Activated B cell treated with CpG ODN at 0.5 μM for 24 hours (primary cell): ENCODE measurements at regions of chr3 and their contacts with region 1.

Region 1: GRCh38 chr3:184298759-184299496 is at the start of gene PSMD2:
- DNase-seq: peak; percentile 96
- ATAC-seq: peak; percentile 96
- H3K4me3 Mint-ChIP-seq: peak within 1 kb of the TSS; percentile 95
- H3K27ac Mint-ChIP-seq: peak within 1 kb of the TSS; percentile 88
- H3K4me1 Mint-ChIP-seq: peaks cover 23% of the 10 kb centered on the region
- H3K27me3 Mint-ChIP-seq: no peaks in the 10 kb centered on the region
- CTCF ChIP-seq: no peak
- total RNA-seq, gene PSMD2: 206 and 210 TPM in 2 replicates

Region 2: GRCh38 chr3:183161552-183162336 is 1137.2 kb before region 1 on chr3:
- CTCF ChIA-PET with region 1: no interaction called
- POLR2A ChIA-PET with region 1: no interaction called
- intact Hi-C with region 1: loop called (anchors 2 kb)
- DNase-seq: peak; percentile 36
- ATAC-seq: peak; percentile 78
- H3K4me3 Mint-ChIP-seq: peak overlapping the region; percentile 81
- H3K27ac Mint-ChIP-seq: peak overlapping the region; percentile 77
- H3K4me1 Mint-ChIP-seq: peaks cover 34% of the 10 kb centered on the region
- H3K27me3 Mint-ChIP-seq: peaks cover 48% of the 10 kb centered on the region
- CTCF ChIP-seq: no peak

Region 3: DNA sequence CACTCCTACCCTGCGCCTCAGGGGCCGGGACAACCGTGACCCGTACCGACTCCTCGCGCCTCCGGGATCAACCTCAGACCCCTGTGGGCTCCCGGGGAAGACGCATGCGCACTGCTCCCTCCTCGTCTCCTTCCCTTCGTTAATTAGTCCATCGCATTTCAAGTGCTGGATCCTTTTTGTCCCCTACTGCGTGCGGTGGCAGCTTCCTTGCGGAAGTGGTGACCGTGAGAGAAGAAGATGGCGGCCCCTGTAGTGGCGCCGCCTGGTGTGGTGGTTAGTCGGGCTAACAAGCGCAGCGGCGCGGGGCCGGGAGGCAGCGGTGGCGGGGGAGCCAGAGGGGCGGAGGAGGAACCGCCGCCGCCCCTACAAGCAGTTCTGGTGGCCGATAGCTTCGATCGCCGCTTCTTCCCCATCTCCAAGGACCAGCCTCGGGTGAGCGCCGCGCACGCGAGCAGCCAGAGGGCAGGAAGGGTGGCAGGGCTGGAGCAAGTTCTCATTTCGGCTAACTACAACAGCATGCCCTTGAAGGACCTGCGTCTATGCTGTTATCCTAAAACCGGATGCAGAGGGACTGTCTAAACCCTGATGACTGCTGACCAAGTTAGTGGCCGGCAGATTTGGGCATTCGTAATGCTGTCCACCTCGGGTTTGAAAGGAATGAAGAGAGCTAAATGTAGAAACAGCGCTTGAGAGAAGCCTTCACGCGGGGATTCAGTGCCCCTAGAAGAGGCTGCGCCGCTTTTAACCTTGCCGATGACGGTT is 163.6 kb before region 1 on chr3 and contains the start of gene EIF2B5:
- CTCF ChIA-PET with region 1: no interaction called
- POLR2A ChIA-PET with region 1: no interaction called
- intact Hi-C with region 1: loop called (anchors 1 kb)
- DNase-seq: peak; percentile 80
- ATAC-seq: peak; percentile 90
- H3K4me3 Mint-ChIP-seq: peak within 1 kb of the TSS; percentile 98
- H3K27ac Mint-ChIP-seq: peak within 1 kb of the TSS; percentile 96
- H3K4me1 Mint-ChIP-seq: peaks cover 33% of the 10 kb centered on the region
- H3K27me3 Mint-ChIP-seq: no peaks in the 10 kb centered on the region
- CTCF ChIP-seq: no peak
- total RNA-seq, gene EIF2B5: 72.0 and 74.2 TPM in 2 replicates

Region 4: GRCh38 chr3:184185461-184186308 is 113.2 kb before region 1 on chr3 and contains the start of gene ABCF3:
- CTCF ChIA-PET with region 1: no interaction called
- POLR2A ChIA-PET with region 1: interaction called, 3 read pairs
- intact Hi-C with region 1: loop called (anchors 1 kb)
- DNase-seq: peak; percentile 99
- ATAC-seq: peak; percentile 95
- H3K4me3 Mint-ChIP-seq: peak within 1 kb of the TSS; percentile 99
- H3K27ac Mint-ChIP-seq: peak within 1 kb of the TSS; percentile 93
- H3K4me1 Mint-ChIP-seq: peaks cover 40% of the 10 kb centered on the region
- H3K27me3 Mint-ChIP-seq: no peaks in the 10 kb centered on the region
- CTCF ChIP-seq: no peak
- total RNA-seq, gene ABCF3: 78.0 and 86.7 TPM in 2 replicates

Region 5: DNA sequence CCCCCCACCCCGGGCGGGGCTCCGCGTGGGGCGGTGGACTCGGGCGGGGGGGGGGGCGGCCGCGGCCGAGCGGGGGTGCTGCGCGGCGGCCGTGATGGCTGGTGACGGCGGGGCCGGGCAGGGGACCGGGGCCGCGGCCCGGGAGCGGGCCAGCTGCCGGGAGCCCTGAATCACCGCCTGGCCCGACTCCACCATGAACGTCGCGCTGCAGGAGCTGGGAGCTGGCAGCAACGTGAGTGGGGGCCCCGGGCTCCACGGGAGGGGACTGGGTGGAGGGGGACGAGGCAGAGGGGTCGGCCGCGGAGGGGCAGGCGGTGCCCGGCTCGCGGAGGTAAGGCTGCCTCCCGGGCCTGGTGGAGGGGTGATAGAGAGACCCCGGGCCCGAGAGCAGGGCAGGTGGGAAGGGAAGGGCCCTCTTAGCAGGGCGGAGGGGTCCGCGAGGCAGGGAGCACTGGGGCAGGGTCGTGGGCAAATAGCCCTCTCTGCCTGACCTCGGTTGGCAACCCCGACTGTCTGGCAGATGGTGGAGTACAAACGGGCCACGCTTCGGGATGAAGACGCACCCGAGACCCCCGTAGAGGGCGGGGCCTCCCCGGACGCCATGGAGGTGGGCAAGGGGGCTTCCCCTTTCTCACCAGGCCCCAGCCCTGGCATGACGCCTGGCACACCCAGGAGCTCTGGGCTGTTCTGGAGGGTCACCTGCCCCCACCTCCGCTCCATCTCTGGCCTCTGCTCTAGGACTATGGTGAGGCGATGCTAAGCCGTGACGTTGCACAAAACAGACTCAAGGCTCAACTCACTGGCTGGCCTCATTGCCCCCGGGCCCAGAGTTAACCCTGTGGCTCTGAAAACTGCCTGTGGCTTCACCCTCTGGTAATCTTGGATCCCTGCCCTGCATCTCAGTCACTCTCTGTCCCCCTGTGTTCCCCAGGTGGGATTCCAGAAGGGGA is 22.7 kb before region 1 on chr3 and contains the start of gene ECE2:
- CTCF ChIA-PET with region 1: no interaction called
- POLR2A ChIA-PET with region 1: no interaction called
- intact Hi-C with region 1: no loop called
- DNase-seq: no peak
- ATAC-seq: no peak
- H3K4me3 Mint-ChIP-seq: no peak within 1 kb of the TSS
- H3K27ac Mint-ChIP-seq: no peak within 1 kb of the TSS
- H3K4me1 Mint-ChIP-seq: peaks cover 3% of the 10 kb centered on the region
- H3K27me3 Mint-ChIP-seq: peaks cover 42% of the 10 kb centered on the region
- CTCF ChIP-seq: no peak
- total RNA-seq, gene ECE2: not detected in 2 replicates

Region 6: DNA sequence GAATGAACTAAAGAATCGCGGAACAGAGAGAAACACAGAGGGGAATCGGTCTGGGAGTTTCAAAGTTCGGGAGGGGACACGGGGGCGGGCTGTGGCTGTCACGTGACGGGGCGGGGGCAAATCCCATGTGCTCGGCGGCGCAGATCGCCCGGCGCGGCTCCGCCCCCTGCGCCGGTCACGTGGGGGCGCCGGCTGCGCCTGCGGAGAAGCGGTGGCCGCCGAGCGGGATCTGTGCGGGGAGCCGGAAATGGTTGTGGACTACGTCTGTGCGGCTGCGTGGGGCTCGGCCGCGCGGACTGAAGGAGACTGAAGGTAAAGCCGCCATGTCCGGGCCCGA is 15.4 kb after region 1 on chr3 and contains the start of gene EIF4G1:
- CTCF ChIA-PET with region 1: no interaction called
- POLR2A ChIA-PET with region 1: interaction called, 3 read pairs
- intact Hi-C with region 1: loop called (anchors 1 kb)
- DNase-seq: peak; percentile 92
- ATAC-seq: peak; percentile 86
- H3K4me3 Mint-ChIP-seq: peak within 1 kb of the TSS; percentile 86
- H3K27ac Mint-ChIP-seq: peak within 1 kb of the TSS; percentile 88
- H3K4me1 Mint-ChIP-seq: peaks cover 28% of the 10 kb centered on the region
- H3K27me3 Mint-ChIP-seq: no peaks in the 10 kb centered on the region
- CTCF ChIP-seq: no peak
- total RNA-seq, gene EIF4G1: 292 and 319 TPM in 2 replicates

Region 7: DNA sequence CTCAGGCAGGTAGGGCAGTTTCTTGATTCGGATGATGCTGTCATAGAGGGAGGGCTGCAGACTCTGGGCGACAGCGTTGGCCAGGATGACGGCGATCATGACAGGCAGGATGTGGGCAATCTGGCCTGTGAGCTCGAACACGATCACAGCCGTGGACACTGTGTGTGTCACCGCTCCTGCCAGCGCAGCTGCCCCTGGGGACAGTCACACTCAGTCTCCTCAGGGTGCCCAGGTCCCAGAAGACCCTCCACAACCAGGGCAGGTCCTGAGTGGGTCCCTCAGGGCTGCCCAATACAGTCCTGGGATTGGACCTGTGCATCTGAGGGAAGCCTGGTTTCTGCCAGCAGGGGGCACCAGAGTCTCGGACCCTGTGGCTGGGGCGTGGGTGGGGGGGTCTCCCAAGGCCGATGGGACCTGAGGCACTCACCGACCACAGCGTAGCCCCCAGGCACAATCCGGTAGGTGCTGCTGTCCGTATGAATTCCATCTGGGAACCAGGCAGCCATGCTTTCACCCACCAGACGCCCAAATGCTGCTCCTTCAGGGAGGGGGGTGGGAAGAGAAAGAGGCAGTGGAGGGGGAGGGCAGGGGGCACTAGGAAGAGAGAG is 55.3 kb after region 1 on chr3:
- CTCF ChIA-PET with region 1: no interaction called
- POLR2A ChIA-PET with region 1: no interaction called
- intact Hi-C with region 1: no loop called
- DNase-seq: peak; percentile 57
- ATAC-seq: peak; percentile 87
- H3K4me3 Mint-ChIP-seq: no peak overlapping the region
- H3K27ac Mint-ChIP-seq: no peak overlapping the region
- H3K4me1 Mint-ChIP-seq: no peaks in the 10 kb centered on the region
- H3K27me3 Mint-ChIP-seq: no peaks in the 10 kb centered on the region
- CTCF ChIP-seq: no peak

Region 8: DNA sequence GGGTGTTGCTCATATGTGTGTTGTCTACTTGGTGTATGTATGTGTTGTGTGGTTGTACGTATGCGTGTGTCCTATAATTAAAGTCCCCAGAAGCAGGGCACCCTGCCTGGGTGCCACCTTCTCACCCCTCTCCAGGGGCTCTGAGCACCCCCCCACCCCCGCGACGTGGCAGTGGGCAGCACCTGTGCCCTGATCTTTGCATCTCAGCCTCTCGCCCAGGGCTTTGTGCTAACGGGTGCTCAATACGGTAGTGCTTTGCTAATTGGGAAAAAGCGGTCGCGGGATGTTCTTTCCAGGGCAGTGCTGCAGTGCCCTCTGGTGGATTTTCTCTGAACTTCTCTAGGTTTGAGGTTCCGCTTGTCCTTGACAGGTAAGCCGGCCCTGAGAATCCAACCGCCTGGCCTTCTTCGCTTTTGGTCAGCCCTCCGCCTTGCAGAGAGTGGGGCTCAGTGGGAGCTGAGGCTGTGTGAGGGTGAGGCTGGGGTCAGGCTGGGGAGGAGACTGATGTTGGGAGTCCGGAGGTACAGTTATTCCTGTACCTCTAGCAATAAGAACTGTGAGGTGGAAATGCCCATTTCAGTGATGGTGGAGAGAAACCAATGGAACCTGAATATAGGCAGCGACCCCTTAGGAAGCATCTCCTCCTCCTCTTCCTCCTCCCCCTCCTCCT is 245.1 kb after region 1 on chr3:
- CTCF ChIA-PET with region 1: no interaction called
- POLR2A ChIA-PET with region 1: no interaction called
- intact Hi-C with region 1: loop called (anchors 5 kb)
- DNase-seq: peak; percentile 56
- ATAC-seq: peak; percentile 85
- H3K4me3 Mint-ChIP-seq: no peak overlapping the region
- H3K27ac Mint-ChIP-seq: no peak overlapping the region
- H3K4me1 Mint-ChIP-seq: peaks cover 12% of the 10 kb centered on the region
- H3K27me3 Mint-ChIP-seq: peaks cover 21% of the 10 kb centered on the region
- CTCF ChIP-seq: peak; percentile 79

Region 9: GRCh38 chr3:186255703-186256331 is 1956.9 kb after region 1 on chr3:
- CTCF ChIA-PET with region 1: no interaction called
- POLR2A ChIA-PET with region 1: no interaction called
- intact Hi-C with region 1: no loop called
- DNase-seq: peak; percentile 64
- ATAC-seq: peak; percentile 65
- H3K4me3 Mint-ChIP-seq: peak overlapping the region; percentile 75
- H3K27ac Mint-ChIP-seq: peak overlapping the region; percentile 83
- H3K4me1 Mint-ChIP-seq: peaks cover 66% of the 10 kb centered on the region
- H3K27me3 Mint-ChIP-seq: no peaks in the 10 kb centered on the region
- CTCF ChIP-seq: no peak